Aorta (tissue), 5 donors: ENCODE measurements at regions of chr15 and their contacts with region 1.

Region 1: GRCh38 chr15:64067564-64068030 is 21.3 kb upstream of the DAPK2 start:
- DNase-seq: peak in 1 of 2 donors; percentile 59
- ATAC-seq: peak; percentile 80
- H3K4me3 ChIP-seq: no peak overlapping the region
- H3K27ac ChIP-seq: no peak overlapping the region
- H3K4me1 ChIP-seq: no peaks in the 10 kb centered on the region
- H3K27me3 ChIP-seq: no peaks in the 10 kb centered on the region

Region 2: DNA sequence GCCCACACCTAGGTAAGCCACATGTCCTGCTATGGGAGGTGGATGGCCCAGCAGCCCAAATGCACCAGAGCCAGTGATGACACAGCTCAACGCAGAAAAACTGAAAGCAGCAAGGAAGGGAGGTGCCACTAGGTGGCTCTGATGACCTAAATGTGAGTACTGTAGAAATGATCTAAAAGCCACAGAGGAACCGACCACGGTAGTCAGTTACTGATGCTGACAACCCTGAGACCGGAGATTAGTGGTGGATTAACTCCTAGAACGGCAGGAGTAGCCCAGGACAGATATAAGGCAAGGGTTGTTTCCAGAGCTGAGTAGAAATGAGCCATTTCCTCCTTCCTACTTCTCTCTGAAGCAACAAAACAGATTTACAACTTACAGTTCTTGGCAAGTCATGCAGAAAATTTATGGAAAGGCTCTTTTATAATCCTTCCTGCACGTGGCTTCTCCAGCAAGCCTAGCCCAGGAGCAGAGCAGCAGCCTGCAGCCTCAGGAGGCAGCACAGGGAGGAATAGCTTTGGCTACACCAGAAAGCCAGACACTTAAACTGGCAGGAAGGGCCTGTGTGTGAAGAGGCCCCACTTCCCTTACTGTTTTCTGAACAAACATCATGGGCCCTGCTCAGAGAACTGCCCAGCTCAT is 457.3 kb before region 1 on chr15:
- intact Hi-C with region 1: loop called in 1 of 2 experiments (anchors 5 kb)
- DNase-seq: peak; percentile 78 to 81
- ATAC-seq: peak; percentile 82
- H3K4me3 ChIP-seq: no peak overlapping the region
- H3K27ac ChIP-seq: peak overlapping the region; percentile 9 to 31
- H3K4me1 ChIP-seq: no peaks in the 10 kb centered on the region
- H3K27me3 ChIP-seq: no peaks in the 10 kb centered on the region

Region 3: DNA sequence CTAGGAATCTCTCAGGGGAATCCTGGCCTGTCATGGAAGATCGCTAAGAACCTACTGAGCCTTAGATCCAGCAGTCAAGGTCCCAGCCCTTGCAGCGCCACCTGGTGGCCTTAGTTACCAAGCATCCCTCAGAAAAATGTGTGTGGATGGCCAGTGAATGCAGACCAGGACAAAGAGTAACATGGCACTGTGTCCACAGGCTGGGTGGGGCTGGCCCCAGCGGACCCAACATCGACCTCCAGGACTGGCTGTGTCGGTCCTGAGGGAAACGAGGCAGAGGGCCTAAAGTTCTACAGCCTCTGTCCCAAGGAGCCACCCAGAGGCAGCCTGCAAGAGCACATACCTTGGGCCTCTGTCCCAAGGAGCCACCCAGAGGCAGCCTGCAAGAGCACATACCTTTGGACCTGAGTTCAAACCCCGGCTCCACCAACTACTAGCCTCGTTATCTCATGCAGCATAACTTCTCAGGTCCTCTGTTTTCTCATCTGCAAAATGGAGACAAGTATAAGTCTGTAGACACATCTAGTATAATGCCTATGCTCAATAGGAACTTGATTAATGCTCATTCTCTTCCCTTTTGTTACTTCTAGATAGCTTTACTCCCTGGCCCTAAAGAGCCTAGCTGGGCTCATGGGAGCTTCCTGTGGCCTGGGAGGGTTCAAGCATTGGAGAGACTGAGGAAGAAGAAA is 176.4 kb before region 1 on chr15:
- intact Hi-C with region 1: loop called in 1 of 2 experiments (anchors 10 kb)
- DNase-seq: peak; percentile 82 to 90
- ATAC-seq: peak; percentile 80
- H3K4me3 ChIP-seq: no peak overlapping the region
- H3K27ac ChIP-seq: no peak overlapping the region
- H3K4me1 ChIP-seq: no peaks in the 10 kb centered on the region
- H3K27me3 ChIP-seq: no peaks in the 10 kb centered on the region

Region 4: DNA sequence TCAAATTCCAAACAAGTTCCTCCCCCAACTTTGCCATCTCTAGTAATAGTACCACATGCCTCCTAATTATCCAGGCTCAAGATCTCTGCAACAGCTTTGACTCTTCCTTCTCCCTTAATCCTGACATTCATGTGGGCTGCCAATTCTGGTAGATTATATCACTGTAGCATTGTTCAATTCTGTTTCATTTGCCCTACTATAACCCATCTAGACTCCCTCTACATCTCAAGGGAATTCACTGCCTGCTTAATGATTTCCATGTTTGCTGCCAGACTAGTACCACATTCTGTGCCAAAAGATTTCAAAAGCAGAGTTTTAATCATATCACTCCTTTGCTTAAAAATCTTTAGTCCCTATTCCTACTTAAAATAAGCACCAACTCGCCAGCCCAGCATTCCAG is 129.8 kb after region 1 on chr15:
- intact Hi-C with region 1: no loop called
- DNase-seq: no peak
- ATAC-seq: peak; percentile 29
- H3K4me3 ChIP-seq: no peak overlapping the region
- H3K27ac ChIP-seq: no peak overlapping the region
- H3K4me1 ChIP-seq: no peaks in the 10 kb centered on the region
- H3K27me3 ChIP-seq: no peaks in the 10 kb centered on the region